ENCODE measurements at regions of chr15 and their contacts with region 1.

Region 1: DNA sequence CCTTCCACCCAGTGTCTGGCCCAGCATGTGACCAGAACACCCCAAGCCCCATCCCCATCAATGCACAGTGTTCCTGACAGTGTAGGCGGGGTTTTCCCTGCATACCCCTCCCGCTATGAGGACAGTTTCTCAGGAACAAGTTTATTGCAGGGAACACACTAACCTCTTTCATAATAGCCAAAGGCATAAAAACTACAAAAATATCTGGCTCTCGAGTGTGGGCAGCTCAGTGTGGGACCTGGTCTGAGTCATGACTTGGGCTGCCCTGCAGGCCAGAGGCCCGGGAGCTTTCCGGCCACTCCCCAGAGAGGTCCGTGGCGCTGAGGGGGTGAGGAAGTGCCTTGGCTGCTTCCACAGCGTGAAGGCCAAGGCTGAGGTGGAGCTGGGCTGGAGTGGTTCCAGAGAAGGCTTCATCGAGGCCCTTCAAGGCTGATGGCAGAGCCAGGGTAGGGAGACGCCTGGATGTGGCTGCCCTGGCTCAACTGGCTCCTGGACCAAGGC is 5.9 kb downstream of the ISLR start:
- DNase-seq: peak; percentile 52
- H3K4me3 ChIP-seq: no peak overlapping the region
- CTCF ChIP-seq: no peak

Region 2: DNA sequence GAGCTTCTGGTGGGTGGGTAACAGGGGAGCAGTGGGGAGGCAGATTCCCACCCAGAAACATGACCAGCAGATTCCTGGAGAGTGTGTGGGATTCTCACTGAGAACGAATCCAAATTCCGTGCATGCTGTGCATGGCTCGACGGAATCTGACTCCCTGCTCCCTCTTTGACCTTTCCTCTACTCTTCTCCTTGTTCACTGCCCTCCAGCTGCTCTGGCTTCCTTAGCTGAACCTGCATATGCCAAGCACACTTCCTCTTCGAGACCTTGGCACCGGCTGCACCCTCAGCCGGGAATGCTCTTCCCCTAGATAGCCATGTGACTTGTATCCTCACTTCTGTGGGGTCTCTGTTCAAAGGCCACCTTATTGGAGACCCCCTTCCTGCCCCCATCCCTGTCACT is 432.5 kb before region 1 on chr15:
- CTCF ChIA-PET with region 1: no interaction called
- POLR2A ChIA-PET with region 1: no interaction called
- DNase-seq: no peak
- H3K4me3 ChIP-seq: no peak overlapping the region
- CTCF ChIP-seq: no peak

Region 3: GRCh38 chr15:74196179-74196590 is 16.8 kb after region 1 on chr15:
- CTCF ChIA-PET with region 1: interaction called, 3 read pairs
- POLR2A ChIA-PET with region 1: interaction called, 20 read pairs
- DNase-seq: peak; percentile 87
- H3K4me3 ChIP-seq: no peak overlapping the region
- CTCF ChIP-seq: no peak